B cell (primary cell): ENCODE measurements at regions of chr14 and their contacts with region 1.

Region 1: DNA sequence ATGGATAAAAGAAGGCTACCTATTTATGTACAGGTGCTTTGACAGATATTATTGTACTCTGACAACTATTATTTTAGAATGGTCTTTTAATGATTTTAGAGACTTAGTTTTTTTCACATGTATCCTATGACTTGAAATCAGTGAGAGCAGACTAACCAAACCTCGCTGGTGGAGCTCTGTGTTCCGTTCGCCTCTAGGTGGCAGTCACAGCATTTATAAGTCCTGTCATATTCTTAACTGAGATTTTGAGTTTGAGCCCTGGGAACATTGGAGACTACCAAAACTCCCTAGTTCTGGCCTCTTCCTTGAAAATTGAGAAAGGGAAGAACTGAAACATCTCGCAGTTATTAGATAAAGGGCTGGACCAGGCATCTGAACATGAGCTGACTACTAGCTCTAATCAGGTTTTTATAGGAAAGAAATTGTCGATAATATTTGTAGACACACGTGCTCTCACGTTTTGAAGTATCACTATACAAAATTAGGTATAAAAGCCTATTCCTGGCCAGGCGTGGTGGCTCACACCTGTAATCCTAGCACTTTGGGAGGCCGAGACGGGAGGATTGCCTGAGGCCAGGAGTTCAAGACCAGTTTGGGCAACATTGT is 48.3 kb downstream of the TTLL5 start:
- DNase-seq: peak; percentile 75
- ATAC-seq: peak; percentile 51
- H3K4me3 ChIP-seq: no peak overlapping the region
- H3K4me3 Mint-ChIP-seq: no peak overlapping the region
- H3K27ac ChIP-seq: no peak overlapping the region
- H3K27ac Mint-ChIP-seq: no peak overlapping the region
- H3K4me1 ChIP-seq: no peaks in the 10 kb centered on the region
- H3K4me1 Mint-ChIP-seq: no peaks in the 10 kb centered on the region
- H3K27me3 ChIP-seq: no peaks in the 10 kb centered on the region
- H3K27me3 Mint-ChIP-seq: no peaks in the 10 kb centered on the region
- CTCF ChIP-seq: peak; percentile 86

Region 2: GRCh38 chr14:75591331-75591946 is 117.9 kb before region 1 on chr14:
- CTCF ChIA-PET with region 1: no interaction called
- POLR2A ChIA-PET with region 1: no interaction called
- intact Hi-C with region 1: no loop called
- DNase-seq: no peak
- ATAC-seq: no peak
- H3K4me3 ChIP-seq: no peak overlapping the region
- H3K4me3 Mint-ChIP-seq: no peak overlapping the region
- H3K27ac ChIP-seq: no peak overlapping the region
- H3K27ac Mint-ChIP-seq: no peak overlapping the region
- H3K4me1 ChIP-seq: no peaks in the 10 kb centered on the region
- H3K4me1 Mint-ChIP-seq: peaks cover 5% of the 10 kb centered on the region
- H3K27me3 ChIP-seq: no peaks in the 10 kb centered on the region
- H3K27me3 Mint-ChIP-seq: no peaks in the 10 kb centered on the region
- CTCF ChIP-seq: no peak

Region 3: DNA sequence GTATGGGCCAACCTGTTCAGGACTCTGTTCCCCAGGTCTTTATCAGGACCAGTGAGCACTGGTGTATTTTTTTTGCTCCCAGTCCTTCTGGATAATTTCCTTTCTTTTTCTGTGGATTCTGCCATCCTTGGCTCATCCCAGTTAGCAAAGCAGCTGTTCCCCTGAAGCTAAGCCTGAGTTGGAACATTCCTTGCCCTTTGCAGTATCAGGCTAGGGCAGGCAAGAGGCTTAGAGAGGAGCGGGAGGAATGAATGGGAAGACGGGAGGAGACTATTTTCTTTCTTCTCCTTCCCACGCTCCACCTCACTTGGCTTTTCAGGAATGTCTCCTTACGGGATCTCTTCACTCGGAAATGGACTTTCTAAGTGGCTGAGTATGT is 77.9 kb before region 1 on chr14:
- CTCF ChIA-PET with region 1: no interaction called
- POLR2A ChIA-PET with region 1: no interaction called
- intact Hi-C with region 1: no loop called
- DNase-seq: no peak
- ATAC-seq: no peak
- H3K4me3 ChIP-seq: no peak overlapping the region
- H3K4me3 Mint-ChIP-seq: no peak overlapping the region
- H3K27ac ChIP-seq: no peak overlapping the region
- H3K27ac Mint-ChIP-seq: no peak overlapping the region
- H3K4me1 ChIP-seq: no peaks in the 10 kb centered on the region
- H3K4me1 Mint-ChIP-seq: no peaks in the 10 kb centered on the region
- H3K27me3 ChIP-seq: peaks cover 0 to 4% (median 3%) of the 10 kb centered on the region in 4 experiments
- H3K27me3 Mint-ChIP-seq: peaks cover 6% of the 10 kb centered on the region
- CTCF ChIP-seq: no peak

Region 4: GRCh38 chr14:75654127-75654732 is 55.1 kb before region 1 on chr14:
- CTCF ChIA-PET with region 1: interaction called, 10 read pairs
- POLR2A ChIA-PET with region 1: interaction called, 4 read pairs
- intact Hi-C with region 1: no loop called
- DNase-seq: peak; percentile 82
- ATAC-seq: peak; percentile 96
- H3K4me3 ChIP-seq: no peak overlapping the region
- H3K4me3 Mint-ChIP-seq: no peak overlapping the region
- H3K27ac ChIP-seq: no peak overlapping the region
- H3K27ac Mint-ChIP-seq: no peak overlapping the region
- H3K4me1 ChIP-seq: no peaks in the 10 kb centered on the region
- H3K4me1 Mint-ChIP-seq: peaks cover 4% of the 10 kb centered on the region
- H3K27me3 ChIP-seq: no peaks in the 10 kb centered on the region
- H3K27me3 Mint-ChIP-seq: no peaks in the 10 kb centered on the region
- CTCF ChIP-seq: peak; percentile 94

Region 5: DNA sequence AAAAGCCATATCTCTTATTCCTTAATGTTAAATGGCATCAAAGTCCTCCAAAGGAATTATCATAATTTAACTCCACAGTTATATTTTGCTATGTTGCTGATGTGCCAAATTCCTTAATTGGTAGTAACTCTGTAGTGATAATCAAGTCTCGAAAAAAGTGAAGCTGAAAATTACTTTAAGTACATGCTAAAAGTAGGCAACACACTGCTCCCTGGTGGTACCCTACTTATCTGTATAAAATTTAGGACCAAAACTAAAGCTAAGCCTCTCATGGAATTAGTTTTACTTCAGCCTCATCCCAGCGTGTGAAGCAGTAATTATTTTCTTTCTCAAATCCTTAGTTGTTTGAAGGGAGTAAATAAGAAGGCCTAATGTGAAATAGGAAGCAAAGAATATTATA is 84.5 kb after region 1 on chr14:
- CTCF ChIA-PET with region 1: interaction called, 12 read pairs
- POLR2A ChIA-PET with region 1: no interaction called
- intact Hi-C with region 1: no loop called
- DNase-seq: no peak
- ATAC-seq: no peak
- H3K4me3 ChIP-seq: no peak overlapping the region
- H3K4me3 Mint-ChIP-seq: no peak overlapping the region
- H3K27ac ChIP-seq: no peak overlapping the region
- H3K27ac Mint-ChIP-seq: no peak overlapping the region
- H3K4me1 ChIP-seq: no peaks in the 10 kb centered on the region
- H3K4me1 Mint-ChIP-seq: no peaks in the 10 kb centered on the region
- H3K27me3 ChIP-seq: no peaks in the 10 kb centered on the region
- H3K27me3 Mint-ChIP-seq: no peaks in the 10 kb centered on the region
- CTCF ChIP-seq: no peak

Region 6: DNA sequence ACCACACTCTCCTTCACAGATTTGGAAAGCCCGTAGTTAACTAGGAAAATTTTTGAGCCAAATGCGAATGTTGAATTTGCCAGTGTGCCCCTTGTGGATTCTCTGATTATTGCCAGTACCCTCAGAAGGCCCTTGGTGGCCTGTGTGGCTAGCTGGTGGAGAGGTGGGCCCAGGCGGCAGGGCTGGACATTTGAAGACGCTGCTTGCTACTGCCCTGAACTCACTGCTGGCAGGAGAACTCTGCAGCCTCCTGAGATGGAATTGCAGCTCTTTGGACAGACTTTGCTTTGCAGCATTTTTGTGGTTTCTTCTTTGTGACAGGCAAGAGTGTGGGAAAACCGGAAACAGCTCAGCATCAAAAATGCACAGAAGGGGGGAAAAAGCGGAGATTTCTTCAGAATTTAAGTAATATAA is 174.9 kb after region 1 on chr14:
- CTCF ChIA-PET with region 1: no interaction called
- POLR2A ChIA-PET with region 1: no interaction called
- intact Hi-C with region 1: loop called (anchors 5 kb)
- DNase-seq: no peak
- ATAC-seq: no peak
- H3K4me3 ChIP-seq: no peak overlapping the region
- H3K4me3 Mint-ChIP-seq: no peak overlapping the region
- H3K27ac ChIP-seq: no peak overlapping the region
- H3K27ac Mint-ChIP-seq: no peak overlapping the region
- H3K4me1 ChIP-seq: no peaks in the 10 kb centered on the region
- H3K4me1 Mint-ChIP-seq: no peaks in the 10 kb centered on the region
- H3K27me3 ChIP-seq: no peaks in the 10 kb centered on the region
- H3K27me3 Mint-ChIP-seq: no peaks in the 10 kb centered on the region
- CTCF ChIP-seq: no peak

Region 7: DNA sequence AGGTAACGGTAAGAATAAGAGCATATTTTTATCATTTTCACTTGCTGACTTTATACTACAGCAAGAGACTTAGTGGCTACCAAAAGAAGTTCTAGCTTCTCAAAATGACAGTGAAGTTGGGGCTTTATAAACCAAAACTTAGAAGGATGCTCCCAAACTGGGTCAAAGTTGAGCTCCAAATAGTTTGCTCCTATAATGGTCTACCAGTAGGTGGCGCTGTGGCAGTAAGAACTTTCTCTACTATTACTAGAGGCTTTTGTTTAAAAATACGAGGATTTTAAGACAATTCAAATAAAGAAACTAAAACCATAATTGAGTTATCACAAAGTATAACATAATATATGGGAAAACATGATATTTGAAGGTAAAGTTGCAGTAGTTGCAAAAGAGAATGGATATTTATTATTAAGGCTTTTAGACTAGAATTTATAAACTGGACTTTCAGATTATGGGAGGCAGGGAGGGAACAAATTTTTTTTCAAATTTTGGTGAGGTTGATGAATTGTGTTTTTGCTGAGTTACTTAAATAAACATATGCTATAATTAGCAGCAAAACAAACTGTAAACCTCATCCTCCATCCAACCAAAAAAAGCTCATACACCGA is 197.5 kb after region 1 on chr14:
- CTCF ChIA-PET with region 1: interaction called, 45 read pairs
- POLR2A ChIA-PET with region 1: no interaction called
- intact Hi-C with region 1: no loop called
- DNase-seq: peak; percentile 76
- ATAC-seq: no peak
- H3K4me3 ChIP-seq: no peak overlapping the region
- H3K4me3 Mint-ChIP-seq: no peak overlapping the region
- H3K27ac ChIP-seq: no peak overlapping the region
- H3K27ac Mint-ChIP-seq: no peak overlapping the region
- H3K4me1 ChIP-seq: no peaks in the 10 kb centered on the region
- H3K4me1 Mint-ChIP-seq: no peaks in the 10 kb centered on the region
- H3K27me3 ChIP-seq: no peaks in the 10 kb centered on the region
- H3K27me3 Mint-ChIP-seq: no peaks in the 10 kb centered on the region
- CTCF ChIP-seq: peak; percentile 97

Region 8: GRCh38 chr14:76352639-76353281 is 643.5 kb after region 1 on chr14:
- CTCF ChIA-PET with region 1: interaction called, 28 read pairs
- POLR2A ChIA-PET with region 1: no interaction called
- intact Hi-C with region 1: no loop called
- DNase-seq: peak; percentile 63
- ATAC-seq: no peak
- H3K4me3 ChIP-seq: no peak overlapping the region
- H3K4me3 Mint-ChIP-seq: peak overlapping the region; percentile 16
- H3K27ac ChIP-seq: no peak overlapping the region
- H3K27ac Mint-ChIP-seq: no peak overlapping the region
- H3K4me1 ChIP-seq: peaks cover 3 to 6% of the 10 kb centered on the region in 2 donors
- H3K4me1 Mint-ChIP-seq: peaks cover 4% of the 10 kb centered on the region
- H3K27me3 ChIP-seq: peaks cover 0 to 22% (median 4%) of the 10 kb centered on the region in 4 experiments
- H3K27me3 Mint-ChIP-seq: peaks cover 51% of the 10 kb centered on the region
- CTCF ChIP-seq: peak; percentile 77

Region 9: GRCh38 chr14:76373456-76373855 is 664.1 kb after region 1 on chr14:
- CTCF ChIA-PET with region 1: no interaction called
- POLR2A ChIA-PET with region 1: no interaction called
- intact Hi-C with region 1: no loop called
- DNase-seq: no peak
- ATAC-seq: no peak
- H3K4me3 ChIP-seq: no peak overlapping the region
- H3K4me3 Mint-ChIP-seq: no peak overlapping the region
- H3K27ac ChIP-seq: no peak overlapping the region
- H3K27ac Mint-ChIP-seq: no peak overlapping the region
- H3K4me1 ChIP-seq: no peaks in the 10 kb centered on the region
- H3K4me1 Mint-ChIP-seq: peaks cover 2% of the 10 kb centered on the region
- H3K27me3 ChIP-seq: peaks cover 0 to 38% (median 8%) of the 10 kb centered on the region in 4 experiments
- H3K27me3 Mint-ChIP-seq: peaks cover 42% of the 10 kb centered on the region
- CTCF ChIP-seq: no peak